ENCODE measurements at regions of chr7 and their contacts with region 1.

Region 1: GRCh38 chr7:152463709-152464311 is 28.0 kb upstream of the KMT2C start:
- DNase-seq: peak; percentile 100
- ATAC-seq: peak; percentile 97 to 98
- H3K4me3 ChIP-seq: peak overlapping the region; percentile 78
- H3K27ac ChIP-seq: peak overlapping the region; percentile 95
- H3K4me1 ChIP-seq: no peaks in the 10 kb centered on the region
- H3K27me3 ChIP-seq: no peaks in the 10 kb centered on the region

Region 2: GRCh38 chr7:151795168-151795811 is 668.5 kb before region 1 on chr7:
- intact Hi-C with region 1: no loop called
- DNase-seq: peak in 2 of 3 donors; percentile 37 to 41
- ATAC-seq: no peak
- H3K4me3 ChIP-seq: no peak overlapping the region
- H3K27ac ChIP-seq: no peak overlapping the region
- H3K4me1 ChIP-seq: peaks cover 2% of the 10 kb centered on the region
- H3K27me3 ChIP-seq: no peaks in the 10 kb centered on the region

Region 3: GRCh38 chr7:152675759-152676636 is 212.2 kb after region 1 on chr7 and contains the start of gene XRCC2:
- intact Hi-C with region 1: loop called in 1 of 4 experiments (anchors 5 kb)
- DNase-seq: peak; percentile 90 to 96 (median 96)
- ATAC-seq: peak; percentile 99
- H3K4me3 ChIP-seq: peak within 1 kb of the TSS; percentile 71
- H3K27ac ChIP-seq: peak within 1 kb of the TSS; percentile 14
- H3K4me1 ChIP-seq: no peaks in the 10 kb centered on the region
- H3K27me3 ChIP-seq: no peaks in the 10 kb centered on the region
- total RNA-seq, gene XRCC2: 0.22 to 0.82 (median 0.57) TPM